CD4-positive, alpha-beta memory T cell (primary cell): ENCODE measurements at regions of chr13 and their contacts with region 1.

Region 1: GRCh38 chr13:99380921-99381645 is 73.9 kb upstream of the GPR183 start:
- DNase-seq: peak in 4 of 5 donors; percentile 52 to 67 (median 61)
- H3K4me3 ChIP-seq: peak overlapping the region in 1 of 2 donors; percentile 0
- H3K4me3 Mint-ChIP-seq: peak overlapping the region in 7 of 8 donors; percentile 61 to 89 (median 73)
- H3K27ac ChIP-seq: peak overlapping the region; percentile 51
- H3K27ac Mint-ChIP-seq: peak overlapping the region; percentile 92 to 99 (median 96)
- H3K4me1 ChIP-seq: peaks cover 87% of the 10 kb centered on the region
- H3K4me1 Mint-ChIP-seq: peaks cover 70 to 97% (median 87%) of the 10 kb centered on the region in 4 donors
- H3K27me3 ChIP-seq: no peaks in the 10 kb centered on the region
- H3K27me3 Mint-ChIP-seq: no peaks in the 10 kb centered on the region

Region 2: GRCh38 chr13:99275093-99275469 is 106.0 kb before region 1 on chr13:
- CTCF ChIA-PET with region 1: interaction called, 315 read pairs
- POLR2A ChIA-PET with region 1: interaction called, 22 read pairs
- intact Hi-C with region 1: no loop called
- DNase-seq: peak; percentile 46 to 67 (median 54)
- H3K4me3 ChIP-seq: peak overlapping the region in 1 of 2 donors; percentile 3
- H3K4me3 Mint-ChIP-seq: peak overlapping the region in 7 of 8 donors; percentile 43 to 86 (median 74)
- H3K27ac ChIP-seq: peak overlapping the region; percentile 11
- H3K27ac Mint-ChIP-seq: peak overlapping the region; percentile 80 to 98 (median 94)
- H3K4me1 ChIP-seq: peaks cover 93% of the 10 kb centered on the region
- H3K4me1 Mint-ChIP-seq: peaks cover 79 to 99% (median 89%) of the 10 kb centered on the region in 4 donors
- H3K27me3 ChIP-seq: no peaks in the 10 kb centered on the region
- H3K27me3 Mint-ChIP-seq: no peaks in the 10 kb centered on the region

Region 3: GRCh38 chr13:99322297-99323103 is 58.6 kb before region 1 on chr13:
- CTCF ChIA-PET with region 1: interaction called, 9 read pairs
- POLR2A ChIA-PET with region 1: interaction called, 10 read pairs
- intact Hi-C with region 1: no loop called
- DNase-seq: peak; percentile 63 to 72 (median 68)
- H3K4me3 ChIP-seq: peak overlapping the region in 1 of 2 donors; percentile 5
- H3K4me3 Mint-ChIP-seq: peak overlapping the region; percentile 20 to 82 (median 68)
- H3K27ac ChIP-seq: peak overlapping the region; percentile 79
- H3K27ac Mint-ChIP-seq: peak overlapping the region; percentile 91 to 99 (median 94)
- H3K4me1 ChIP-seq: peaks cover 87% of the 10 kb centered on the region
- H3K4me1 Mint-ChIP-seq: peaks cover 54 to 84% (median 69%) of the 10 kb centered on the region in 4 donors
- H3K27me3 ChIP-seq: no peaks in the 10 kb centered on the region
- H3K27me3 Mint-ChIP-seq: no peaks in the 10 kb centered on the region

Region 4: DNA sequence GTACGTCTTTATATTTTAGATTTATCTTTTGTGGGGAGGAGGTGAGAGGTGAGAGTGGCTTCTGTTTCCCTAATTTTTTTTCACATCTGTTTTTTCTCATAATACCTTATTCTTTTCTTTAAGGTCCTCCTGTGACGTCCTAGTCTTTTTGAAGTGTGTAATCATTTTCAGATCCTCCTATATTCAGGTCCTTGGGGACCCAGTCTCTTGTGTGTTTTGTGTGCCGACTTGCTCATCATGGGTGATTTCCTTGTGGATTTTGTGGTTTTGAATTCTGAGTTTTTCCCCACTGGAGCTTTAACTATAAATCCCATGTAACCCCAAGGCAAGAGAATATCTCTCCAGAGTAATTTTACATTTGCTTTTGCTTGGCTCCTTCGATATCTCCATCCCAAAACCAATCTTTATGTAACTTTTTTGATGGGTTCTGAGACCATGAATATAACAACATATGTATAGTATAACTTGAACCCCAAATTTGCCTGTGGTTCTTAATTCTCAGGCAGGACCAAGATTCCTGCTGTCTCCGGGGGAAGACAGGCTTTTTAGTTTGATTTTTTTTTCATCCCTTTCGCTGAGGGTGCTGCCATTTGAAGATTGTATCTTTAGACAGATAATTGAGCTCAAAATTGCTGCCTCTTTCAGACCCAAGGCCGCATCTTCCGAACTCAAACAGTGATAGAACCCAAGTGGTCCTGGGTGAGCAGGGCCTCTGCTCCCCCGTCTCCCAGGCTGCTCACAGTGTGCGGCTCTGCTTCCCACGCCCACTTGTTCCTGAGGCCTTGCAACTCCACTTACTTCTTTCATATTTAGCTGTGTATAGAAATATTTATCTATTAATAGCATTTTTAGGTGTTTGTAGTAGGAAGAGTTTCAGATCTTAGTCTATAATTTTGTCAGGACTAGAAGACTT is 14.8 kb before region 1 on chr13:
- CTCF ChIA-PET with region 1: interaction called, 14 read pairs
- POLR2A ChIA-PET with region 1: interaction called, 112 read pairs
- intact Hi-C with region 1: no loop called
- DNase-seq: no peak
- H3K4me3 ChIP-seq: peak overlapping the region in 1 of 2 donors; percentile 22
- H3K4me3 Mint-ChIP-seq: peak overlapping the region; percentile 41 to 93 (median 78)
- H3K27ac ChIP-seq: peak overlapping the region; percentile 70
- H3K27ac Mint-ChIP-seq: peak overlapping the region; percentile 96 to 98 (median 97)
- H3K4me1 ChIP-seq: peaks cover 98% of the 10 kb centered on the region
- H3K4me1 Mint-ChIP-seq: peaks cover 73 to 98% (median 85%) of the 10 kb centered on the region in 4 donors
- H3K27me3 ChIP-seq: no peaks in the 10 kb centered on the region
- H3K27me3 Mint-ChIP-seq: no peaks in the 10 kb centered on the region

Region 5: GRCh38 chr13:99425485-99426341 is 44.6 kb after region 1 on chr13:
- CTCF ChIA-PET with region 1: interaction called, 49 read pairs
- POLR2A ChIA-PET with region 1: interaction called, 7 read pairs
- intact Hi-C with region 1: loop called (anchors 2 kb)
- DNase-seq: peak; percentile 41 to 67 (median 49)
- H3K4me3 ChIP-seq: peak overlapping the region; percentile 14 to 34
- H3K4me3 Mint-ChIP-seq: peak overlapping the region; percentile 23 to 88 (median 82)
- H3K27ac ChIP-seq: peak overlapping the region; percentile 60
- H3K27ac Mint-ChIP-seq: peak overlapping the region; percentile 90 to 96 (median 93)
- H3K4me1 ChIP-seq: peaks cover 42% of the 10 kb centered on the region
- H3K4me1 Mint-ChIP-seq: peaks cover 29 to 59% (median 44%) of the 10 kb centered on the region in 4 donors
- H3K27me3 ChIP-seq: no peaks in the 10 kb centered on the region
- H3K27me3 Mint-ChIP-seq: no peaks in the 10 kb centered on the region